AG04449 (cell line): ENCODE measurements at regions of chr10 and their contacts with region 1.

Region 1: DNA sequence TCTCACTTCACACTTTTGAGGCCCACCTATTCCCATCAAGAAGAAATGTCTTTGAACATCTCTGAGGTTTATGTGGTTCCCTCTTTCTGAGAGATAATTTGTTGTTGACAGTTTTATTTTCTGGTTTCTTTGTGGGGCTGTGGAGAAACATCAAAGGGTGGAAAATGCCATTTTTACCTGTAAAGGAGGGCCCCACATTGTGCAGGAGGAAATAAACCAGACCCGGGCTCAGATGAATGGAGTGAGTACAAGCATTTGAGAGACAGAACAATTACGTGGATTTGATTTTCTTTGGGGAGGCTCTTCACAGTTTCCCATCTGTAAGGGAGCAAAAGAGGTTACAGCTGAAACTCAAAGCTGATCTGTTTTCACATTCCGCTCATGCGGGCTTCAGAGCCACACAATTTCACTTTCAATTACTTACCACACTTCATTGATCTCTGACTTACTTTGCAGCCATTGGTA is 29.8 kb downstream of the ITPRIP start:
- DNase-seq: no peak
- H3K4me3 ChIP-seq: no peak overlapping the region
- CTCF ChIP-seq: no peak

Region 2: GRCh38 chr10:104322416-104322782 is 13.9 kb after region 1 on chr10:
- CTCF ChIA-PET with region 1: interaction called, 122 read pairs
- POLR2A ChIA-PET with region 1: interaction called, 5 read pairs
- DNase-seq: no peak
- H3K4me3 ChIP-seq: no peak overlapping the region
- CTCF ChIP-seq: no peak

Region 3: GRCh38 chr10:104328896-104329710 is 20.6 kb after region 1 on chr10:
- CTCF ChIA-PET with region 1: interaction called, 122 read pairs
- POLR2A ChIA-PET with region 1: interaction called, 9 read pairs
- DNase-seq: no peak
- H3K4me3 ChIP-seq: peak overlapping the region; percentile 47
- CTCF ChIP-seq: no peak

Region 4: DNA sequence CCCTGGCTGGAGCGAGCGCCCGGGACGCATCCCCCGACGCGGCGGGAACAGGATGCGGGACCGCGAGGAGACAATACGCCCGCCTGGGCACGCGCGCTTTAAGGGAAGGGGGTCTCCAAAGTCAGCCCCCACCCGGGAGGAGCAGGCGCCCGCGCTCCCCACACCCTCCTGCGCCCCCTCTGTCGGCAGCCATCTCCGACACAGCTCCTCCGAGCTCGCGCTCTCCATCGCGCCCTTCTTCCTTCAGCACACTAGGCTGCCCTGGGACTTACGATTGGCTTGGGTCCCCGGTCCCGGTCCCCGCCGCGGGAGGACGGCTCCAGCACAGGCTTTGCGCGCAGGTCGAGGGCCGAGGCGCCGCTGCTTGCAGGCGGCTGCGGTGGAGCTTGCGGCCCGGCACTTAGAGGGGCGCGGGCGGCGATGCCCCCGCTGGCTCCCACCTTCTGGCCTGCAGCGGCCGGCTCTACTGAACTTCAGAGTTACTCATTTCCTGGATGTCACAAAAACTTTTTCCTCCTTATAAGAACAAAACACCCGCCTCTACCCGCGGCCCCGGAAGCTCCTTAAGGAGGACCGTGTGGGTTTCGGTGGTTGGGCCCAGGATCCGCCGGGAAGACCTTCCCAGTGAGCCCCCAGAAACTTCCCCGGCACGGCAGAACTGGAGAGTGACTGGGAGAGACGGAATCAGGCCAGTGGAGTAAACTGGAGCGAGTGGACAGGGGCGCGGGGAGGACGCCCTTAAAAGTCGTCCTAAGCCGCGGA is 29.7 kb after region 1 on chr10 and contains the start of gene ITPRIP:
- CTCF ChIA-PET with region 1: interaction called, 45 read pairs
- POLR2A ChIA-PET with region 1: interaction called, 6 read pairs
- DNase-seq: no peak
- H3K4me3 ChIP-seq: peak within 1 kb of the TSS; percentile 85
- CTCF ChIP-seq: peak; percentile 28